Activated CD4-positive, alpha-beta T cell treated with anti-CD3 and anti-CD28 coated beads for 36 hours (primary cell): ENCODE measurements at regions of chr2 and their contacts with region 1.

Region 1: GRCh38 chr2:99348173-99348572 is 11.0 kb downstream of the EIF5B start:
- DNase-seq: peak; percentile 26
- ATAC-seq: peak; percentile 92
- H3K4me3 Mint-ChIP-seq: no peak overlapping the region
- H3K27ac Mint-ChIP-seq: peak overlapping the region; percentile 16
- H3K4me1 Mint-ChIP-seq: peaks cover 60% of the 10 kb centered on the region
- H3K27me3 Mint-ChIP-seq: no peaks in the 10 kb centered on the region

Region 2: GRCh38 chr2:99377879-99378278 is 29.7 kb after region 1 on chr2:
- CTCF ChIA-PET with region 1: no interaction called
- POLR2A ChIA-PET with region 1: no interaction called
- intact Hi-C with region 1: loop called in 1 of 2 experiments (anchors 2 kb)
- DNase-seq: no peak
- ATAC-seq: peak; percentile 87
- H3K4me3 Mint-ChIP-seq: no peak overlapping the region
- H3K27ac Mint-ChIP-seq: peak overlapping the region; percentile 65
- H3K4me1 Mint-ChIP-seq: peaks cover 40% of the 10 kb centered on the region
- H3K27me3 Mint-ChIP-seq: no peaks in the 10 kb centered on the region